ENCODE measurements at regions of chr9 and their contacts with region 1.

Region 1: GRCh38 chr9:121972501-121972981 is 120.6 kb downstream of the TTLL11 start:
- DNase-seq: peak; percentile 95
- H3K27ac ChIP-seq: peak overlapping the region; percentile 84
- CTCF ChIP-seq: no peak

Region 2: GRCh38 chr9:120545701-120546550 is 1426.6 kb before region 1 on chr9:
- CTCF ChIA-PET with region 1: no interaction called
- POLR2A ChIA-PET with region 1: interaction called, 10 read pairs
- DNase-seq: no peak
- H3K27ac ChIP-seq: no peak overlapping the region
- CTCF ChIP-seq: no peak

Measured in RWPE1 (cell line).